ENCODE measurements at regions of chr15 and their contacts with region 1.

Region 1: GRCh38 chr15:99275525-99276128 is 24.3 kb downstream of the LRRC28 start:
- DNase-seq: no peak
- CTCF ChIP-seq: no peak

Region 2: DNA sequence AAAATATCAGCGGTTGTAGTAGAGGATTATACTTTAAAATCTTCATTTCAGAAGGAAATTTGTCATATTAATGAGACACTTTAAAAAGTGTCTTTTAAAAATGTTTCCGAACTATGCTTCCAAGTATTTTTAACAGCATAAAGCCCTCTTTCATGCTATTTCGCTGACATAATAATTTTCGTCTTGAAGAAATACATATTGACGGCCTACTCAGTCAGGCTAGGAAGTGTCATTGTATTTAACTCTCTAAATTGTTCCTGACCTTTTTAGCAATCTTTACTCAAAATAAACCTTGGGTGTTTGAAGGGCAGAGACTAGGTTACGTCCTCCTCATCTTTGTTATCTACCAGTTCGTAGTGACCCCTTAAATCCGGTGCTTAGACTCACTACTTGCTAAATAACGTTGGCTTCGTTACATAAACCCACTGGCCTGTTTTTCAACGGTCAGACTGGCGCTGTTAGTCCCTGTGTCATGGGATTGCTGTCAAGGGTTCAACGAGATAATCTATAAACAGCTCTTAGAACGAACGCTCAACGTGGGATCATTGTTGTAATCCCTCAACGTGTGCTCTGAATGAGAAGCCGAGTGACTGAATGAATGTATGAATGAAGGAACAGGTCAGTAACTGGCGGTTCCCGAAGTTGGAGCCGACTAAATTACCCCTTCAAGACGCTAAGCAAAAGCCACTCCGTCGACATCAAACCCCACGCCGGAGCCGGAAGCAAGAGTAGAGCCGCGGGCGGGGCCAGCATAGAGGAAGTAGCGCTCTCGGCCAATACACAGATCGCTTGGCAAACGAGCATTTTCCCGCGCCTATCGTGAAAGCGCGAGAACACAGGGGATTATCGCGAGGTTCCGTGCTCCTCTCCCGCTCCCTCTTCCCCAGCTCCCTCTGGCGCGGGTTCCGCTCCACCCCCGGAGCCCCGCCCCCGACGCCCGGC is 24.9 kb before region 1 on chr15:
- CTCF ChIA-PET with region 1: interaction called, 37 read pairs
- POLR2A ChIA-PET with region 1: no interaction called
- DNase-seq: peak; percentile 96
- CTCF ChIP-seq: no peak

Region 3: DNA sequence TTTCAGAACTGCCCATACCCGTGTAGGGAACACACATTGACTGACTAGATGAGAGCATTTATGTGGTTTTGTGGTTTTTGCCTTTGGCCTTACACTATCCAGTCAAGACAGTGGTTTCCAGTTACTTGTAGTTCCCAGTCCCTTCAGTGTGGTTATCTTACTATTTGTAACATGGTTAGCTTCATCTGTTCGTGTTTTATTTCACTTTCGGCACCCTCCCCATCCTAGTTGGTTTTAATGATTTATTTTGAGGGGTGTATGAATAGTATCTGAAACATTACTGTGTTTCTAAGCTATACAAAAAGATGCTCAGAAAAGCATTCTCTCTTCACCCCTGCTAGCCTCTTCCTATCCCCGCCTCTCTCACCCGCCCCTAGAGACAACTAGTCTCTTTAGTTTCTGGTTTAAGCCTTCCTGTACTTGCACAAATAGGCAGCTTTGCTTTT is 443.5 kb after region 1 on chr15:
- CTCF ChIA-PET with region 1: interaction called, 18 read pairs
- POLR2A ChIA-PET with region 1: no interaction called
- DNase-seq: peak; percentile 59
- CTCF ChIP-seq: no peak

Region 4: DNA sequence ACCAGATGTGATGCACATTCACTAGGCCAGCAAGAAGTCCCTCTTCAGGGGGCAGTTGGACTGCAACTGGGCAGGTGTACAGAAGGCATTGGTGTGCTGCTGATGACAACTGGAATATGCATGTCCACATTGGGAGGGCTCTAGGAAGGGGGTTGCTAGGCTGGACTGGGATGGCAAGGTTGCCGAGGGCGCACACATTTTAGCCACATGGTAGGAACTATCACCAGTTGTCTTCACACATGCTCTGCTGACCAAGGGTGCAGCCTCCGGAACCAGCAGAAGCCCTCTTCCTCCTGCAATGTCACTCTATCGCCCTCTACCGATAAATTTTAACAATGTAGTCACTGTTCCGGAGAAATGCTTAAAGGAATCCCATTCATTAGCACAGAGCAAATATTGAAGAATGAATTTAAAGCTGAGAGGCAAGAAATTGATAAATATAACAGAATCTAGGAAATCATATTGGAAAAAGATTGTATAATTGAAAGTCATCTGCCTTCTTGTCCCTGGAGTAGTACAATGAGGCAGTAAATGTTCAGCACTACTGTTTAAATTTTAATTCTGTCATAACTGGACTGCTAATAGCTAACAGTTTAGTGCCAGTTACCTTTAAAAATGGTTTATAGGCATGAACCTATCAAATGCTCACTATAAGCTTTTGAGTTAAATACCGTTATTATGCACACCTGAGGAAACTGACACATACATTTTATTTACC is 480.2 kb after region 1 on chr15:
- CTCF ChIA-PET with region 1: interaction called, 75 read pairs
- POLR2A ChIA-PET with region 1: no interaction called
- DNase-seq: peak; percentile 77
- CTCF ChIP-seq: peak; percentile 68

Region 5: GRCh38 chr15:99928429-99928981 is 652.9 kb after region 1 on chr15:
- CTCF ChIA-PET with region 1: interaction called, 10 read pairs
- POLR2A ChIA-PET with region 1: no interaction called
- DNase-seq: peak; percentile 86
- CTCF ChIP-seq: peak; percentile 77